Sigmoid colon (tissue), 7 donors: ENCODE measurements at regions of chr4 and their contacts with region 1.

Region 1: DNA sequence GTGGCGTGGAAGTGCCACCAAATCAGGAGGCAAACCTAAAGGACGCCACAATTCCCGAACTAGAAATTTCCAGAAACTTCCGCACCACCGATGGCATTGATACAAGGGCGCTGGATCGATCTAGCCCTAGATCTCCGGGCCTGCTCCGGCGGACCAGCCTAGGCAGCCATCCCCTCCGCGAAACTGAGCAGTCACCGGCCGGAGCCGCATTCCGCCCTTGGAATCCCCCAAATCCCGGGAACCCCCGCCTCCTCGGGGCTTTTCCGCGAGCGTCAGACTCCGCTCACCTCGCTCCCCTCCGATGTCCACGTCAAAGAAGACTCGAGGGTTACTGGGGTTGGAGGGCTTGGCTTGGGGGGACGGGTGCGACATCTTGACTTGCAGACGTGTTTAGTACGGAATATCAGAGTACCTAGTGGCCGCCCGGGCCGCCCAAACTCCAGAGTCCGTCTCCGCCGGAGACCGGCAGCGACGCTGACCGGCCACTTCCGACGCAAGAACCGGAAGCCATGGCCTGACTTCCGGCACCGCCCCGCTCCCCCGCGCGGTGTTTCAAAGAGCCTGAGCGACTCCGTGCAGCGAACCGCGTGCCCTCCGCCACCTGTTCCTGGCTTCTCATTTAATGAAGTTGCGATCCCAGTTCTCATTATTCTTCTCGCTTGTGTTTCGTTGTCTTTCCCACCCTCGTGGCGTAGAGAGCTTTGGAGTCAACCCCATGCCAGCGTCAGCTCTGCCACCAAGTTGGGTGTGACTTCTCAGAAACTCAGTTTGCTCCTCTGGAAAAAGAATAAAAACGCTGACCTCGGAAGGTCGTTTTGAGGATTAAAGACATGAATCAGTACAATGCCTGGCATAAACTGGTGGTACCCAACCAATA is at the start of gene PPID:
- DNase-seq: peak; percentile 88
- H3K4me3 ChIP-seq: peak within 1 kb of the TSS; percentile 61 to 85 (median 72)
- H3K27ac ChIP-seq: peak within 1 kb of the TSS; percentile 82 to 92 (median 89)
- H3K4me1 ChIP-seq: peaks cover 0 to 14% (median 11%) of the 10 kb centered on the region in 4 donors
- H3K27me3 ChIP-seq: no peaks in the 10 kb centered on the region
- CTCF ChIP-seq: no peak
- EP300 ChIP-seq: peak in 1 of 4 donors; percentile 1
- POLR2A ChIP-seq: peak; percentile 68 to 70
- total RNA-seq, gene PPID: 17.8 to 54.8 (median 28.6) TPM

Region 2: GRCh38 chr4:158006990-158007389 is 716.2 kb before region 1 on chr4:
- intact Hi-C with region 1: no loop called
- DNase-seq: no peak
- H3K4me3 ChIP-seq: no peak overlapping the region
- H3K27ac ChIP-seq: peak overlapping the region; percentile 54 to 69 (median 60)
- H3K4me1 ChIP-seq: peaks cover 0 to 71% (median 38%) of the 10 kb centered on the region in 4 donors
- H3K27me3 ChIP-seq: no peaks in the 10 kb centered on the region
- CTCF ChIP-seq: no peak
- EP300 ChIP-seq: no peak
- POLR2A ChIP-seq: no peak

Region 3: DNA sequence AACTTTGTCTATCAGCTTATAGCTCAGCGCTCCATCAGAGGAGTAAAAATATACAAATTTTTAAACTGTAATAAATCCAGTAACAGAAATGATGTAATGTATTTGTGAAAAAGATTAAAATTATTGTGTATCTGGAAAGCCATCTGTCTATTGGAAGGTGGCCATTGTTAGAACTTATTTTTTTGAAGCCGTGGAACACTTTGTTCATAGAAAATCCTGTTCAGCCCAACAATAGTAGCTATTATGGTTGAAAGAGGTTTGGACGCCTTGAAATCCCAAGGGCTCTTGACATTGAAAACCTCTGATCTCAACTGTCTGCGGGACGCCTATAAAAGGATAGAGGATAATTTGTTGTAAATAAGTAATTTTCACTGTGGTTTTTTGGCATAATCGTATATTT is 478.0 kb after region 1 on chr4:
- intact Hi-C with region 1: loop called (anchors 5 kb)
- DNase-seq: no peak
- H3K4me3 ChIP-seq: no peak overlapping the region
- H3K27ac ChIP-seq: peak overlapping the region in 3 of 4 donors; percentile 11 to 32 (median 29)
- H3K4me1 ChIP-seq: peaks cover 0 to 20% (median 14%) of the 10 kb centered on the region in 4 donors
- H3K27me3 ChIP-seq: no peaks in the 10 kb centered on the region
- CTCF ChIP-seq: no peak
- EP300 ChIP-seq: no peak
- POLR2A ChIP-seq: no peak